Motor neuron (in vitro differentiated cells): ENCODE measurements at regions of chr15 and their contacts with region 1.

Region 1: DNA sequence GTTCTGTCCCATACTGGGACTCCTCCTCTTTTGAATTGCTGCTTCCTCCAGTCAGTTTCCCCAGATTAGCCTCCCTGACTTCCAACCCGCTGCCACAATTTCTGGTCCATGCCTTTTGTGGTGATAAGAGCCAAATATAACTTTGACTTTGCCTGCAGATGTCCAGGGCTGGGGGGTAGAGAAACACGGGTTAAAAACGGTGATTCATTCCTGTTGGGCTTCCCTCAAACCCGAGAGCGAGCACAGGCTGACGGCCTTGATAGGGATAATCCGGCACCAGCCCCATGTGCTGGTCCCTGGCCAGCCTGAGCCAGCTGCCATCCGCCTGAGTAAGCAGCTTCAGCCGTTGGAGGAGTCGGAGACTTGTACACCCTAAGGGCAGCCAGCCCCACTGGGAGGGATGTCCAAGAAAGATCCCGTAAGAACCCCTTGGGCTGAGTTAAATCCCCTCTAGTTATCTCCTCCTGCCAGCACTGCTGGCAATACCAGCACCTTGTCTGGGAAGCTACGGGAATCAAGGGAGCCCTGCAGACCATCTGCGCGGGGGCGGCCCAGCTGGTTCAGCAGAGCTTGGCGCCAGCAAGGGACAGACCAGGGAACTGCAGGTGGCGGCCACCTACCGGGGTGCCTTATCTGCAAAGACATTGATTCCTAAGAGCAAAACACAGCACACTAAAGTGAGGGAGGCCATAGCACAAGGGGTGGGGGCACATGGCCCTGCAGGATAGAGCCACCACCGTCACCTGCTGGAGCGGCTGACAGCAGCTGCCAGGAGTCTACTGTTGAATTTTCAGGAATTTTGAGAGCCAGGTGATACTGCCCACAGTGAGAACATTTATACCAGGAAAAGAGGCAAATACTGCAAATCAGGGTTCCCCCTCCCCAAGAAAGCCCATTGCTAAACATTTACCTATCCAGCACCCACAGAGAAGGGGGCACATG is 18.1 kb downstream of the CSPG4 start:
- ATAC-seq: peak; percentile 75 to 94 (median 86)
- H3K4me3 ChIP-seq: no peak overlapping the region
- H3K27ac ChIP-seq: peak overlapping the region in 1 of 2 donors; percentile 51
- H3K4me1 ChIP-seq: peaks cover 7 to 22% of the 10 kb centered on the region in 2 donors

Region 2: DNA sequence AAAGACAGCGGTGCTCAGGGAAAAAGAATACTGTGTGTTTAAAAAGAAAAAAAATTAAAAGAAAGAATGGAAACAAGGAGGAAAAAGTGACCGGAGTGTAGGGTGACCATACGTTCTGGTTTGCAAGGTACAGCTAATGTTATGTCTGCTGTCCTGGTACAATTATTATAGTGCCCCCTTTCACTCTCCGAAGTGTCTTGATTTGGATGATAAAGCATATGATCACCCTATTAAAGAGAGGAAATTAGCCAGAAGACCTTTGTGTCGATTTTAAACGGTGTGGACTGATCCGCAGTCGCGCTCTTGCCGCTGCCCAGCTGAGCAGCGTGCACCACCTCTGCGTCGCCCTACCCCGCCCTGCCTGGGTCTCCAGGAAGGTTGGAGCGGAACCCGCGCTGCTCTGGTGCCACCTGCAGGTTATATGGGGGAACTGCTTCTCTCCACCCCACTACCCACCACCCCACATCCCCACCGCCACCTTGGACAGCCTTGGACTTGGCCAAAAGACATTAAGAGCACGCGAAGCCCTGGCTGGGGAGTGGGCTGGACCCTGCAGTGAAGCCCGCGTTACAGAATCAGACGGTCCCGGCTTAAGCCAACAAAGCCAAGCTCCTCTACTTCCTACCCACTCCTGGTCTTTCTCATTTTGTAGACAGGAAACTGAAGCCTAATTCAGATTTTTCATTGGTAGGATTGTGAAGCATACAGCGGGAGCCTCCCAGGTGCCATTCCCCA is 107.5 kb after region 1 on chr15:
- in situ Hi-C with region 1: loop called in 3 of 9 experiments (anchors 10 to 25 kb)
- ATAC-seq: peak; percentile 99 to 100 (median 99)
- H3K4me3 ChIP-seq: peak overlapping the region in 2 of 5 donors; percentile 0 to 7
- H3K27ac ChIP-seq: no peak overlapping the region
- H3K4me1 ChIP-seq: no peaks in the 10 kb centered on the region

Region 3: GRCh38 chr15:76139368-76140073 is 445.0 kb after region 1 on chr15:
- in situ Hi-C with region 1: no loop called
- ATAC-seq: peak; percentile 63 to 97 (median 78)
- H3K4me3 ChIP-seq: no peak overlapping the region
- H3K27ac ChIP-seq: no peak overlapping the region
- H3K4me1 ChIP-seq: peaks cover 0 to 6% of the 10 kb centered on the region in 2 donors